A673 (cell line): ENCODE measurements at regions of chr10 and their contacts with region 1.

Region 1: DNA sequence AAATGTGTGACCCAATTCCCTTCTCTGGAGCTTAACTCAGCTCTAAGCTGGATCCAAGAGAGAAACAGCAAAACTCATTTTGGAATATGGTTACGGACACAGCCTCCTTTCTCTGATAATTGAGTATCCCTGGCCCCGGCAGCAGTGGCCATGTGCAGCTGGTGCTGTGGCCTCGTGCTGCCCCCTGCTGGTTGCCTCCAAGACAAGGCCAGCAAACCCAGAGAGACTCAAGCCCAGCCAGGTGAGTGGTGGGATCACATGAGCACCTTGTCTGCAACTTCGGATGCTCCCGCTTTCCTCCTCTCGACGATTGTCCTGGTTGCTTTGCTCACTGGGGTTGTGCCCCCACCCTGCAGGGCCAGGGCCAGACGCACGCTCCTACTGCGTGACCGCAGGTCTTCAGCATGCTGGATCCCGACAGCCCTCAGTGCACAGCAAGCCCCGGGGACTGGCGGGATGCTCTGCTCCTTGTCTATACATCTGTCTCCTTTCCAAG is 19.4 kb downstream of the SFTPD start:
- DNase-seq: peak; percentile 74
- H3K4me3 ChIP-seq: no peak overlapping the region
- H3K27ac ChIP-seq: no peak overlapping the region
- H3K4me1 ChIP-seq: no peaks in the 10 kb centered on the region
- H3K27me3 ChIP-seq: peaks cover 14% of the 10 kb centered on the region
- CTCF ChIP-seq: peak; percentile 89

Region 2: GRCh38 chr10:79454259-79454658 is 475.2 kb before region 1 on chr10:
- CTCF ChIA-PET with region 1: no interaction called
- POLR2A ChIA-PET with region 1: no interaction called
- intact Hi-C with region 1: no loop called
- DNase-seq: no peak
- H3K4me3 ChIP-seq: no peak overlapping the region
- H3K27ac ChIP-seq: no peak overlapping the region
- H3K4me1 ChIP-seq: no peaks in the 10 kb centered on the region
- H3K27me3 ChIP-seq: no peaks in the 10 kb centered on the region
- CTCF ChIP-seq: no peak

Region 3: GRCh38 chr10:79562135-79562756 is 367.2 kb before region 1 on chr10:
- CTCF ChIA-PET with region 1: no interaction called
- POLR2A ChIA-PET with region 1: no interaction called
- intact Hi-C with region 1: loop called (anchors 1 kb)
- DNase-seq: peak; percentile 71
- H3K4me3 ChIP-seq: no peak overlapping the region
- H3K27ac ChIP-seq: no peak overlapping the region
- H3K4me1 ChIP-seq: no peaks in the 10 kb centered on the region
- H3K27me3 ChIP-seq: peaks cover 32% of the 10 kb centered on the region
- CTCF ChIP-seq: peak; percentile 95